AG04450 (cell line): ENCODE measurements at regions of chr19 and their contacts with region 1.

Region 1: GRCh38 chr19:13277104-13277809 is 127.0 kb downstream of the IER2 start:
- DNase-seq: peak; percentile 55
- H3K4me3 ChIP-seq: no peak overlapping the region
- H3K27ac ChIP-seq: peak overlapping the region; percentile 11
- H3K27me3 ChIP-seq: peaks cover 1% of the 10 kb centered on the region
- CTCF ChIP-seq: peak; percentile 61

Region 2: GRCh38 chr19:13291759-13292312 is 14.6 kb after region 1 on chr19:
- CTCF ChIA-PET with region 1: interaction called, 16 read pairs
- POLR2A ChIA-PET with region 1: interaction called, 3 read pairs
- DNase-seq: no peak
- H3K4me3 ChIP-seq: no peak overlapping the region
- H3K27ac ChIP-seq: no peak overlapping the region
- H3K27me3 ChIP-seq: no peaks in the 10 kb centered on the region
- CTCF ChIP-seq: no peak

Region 3: DNA sequence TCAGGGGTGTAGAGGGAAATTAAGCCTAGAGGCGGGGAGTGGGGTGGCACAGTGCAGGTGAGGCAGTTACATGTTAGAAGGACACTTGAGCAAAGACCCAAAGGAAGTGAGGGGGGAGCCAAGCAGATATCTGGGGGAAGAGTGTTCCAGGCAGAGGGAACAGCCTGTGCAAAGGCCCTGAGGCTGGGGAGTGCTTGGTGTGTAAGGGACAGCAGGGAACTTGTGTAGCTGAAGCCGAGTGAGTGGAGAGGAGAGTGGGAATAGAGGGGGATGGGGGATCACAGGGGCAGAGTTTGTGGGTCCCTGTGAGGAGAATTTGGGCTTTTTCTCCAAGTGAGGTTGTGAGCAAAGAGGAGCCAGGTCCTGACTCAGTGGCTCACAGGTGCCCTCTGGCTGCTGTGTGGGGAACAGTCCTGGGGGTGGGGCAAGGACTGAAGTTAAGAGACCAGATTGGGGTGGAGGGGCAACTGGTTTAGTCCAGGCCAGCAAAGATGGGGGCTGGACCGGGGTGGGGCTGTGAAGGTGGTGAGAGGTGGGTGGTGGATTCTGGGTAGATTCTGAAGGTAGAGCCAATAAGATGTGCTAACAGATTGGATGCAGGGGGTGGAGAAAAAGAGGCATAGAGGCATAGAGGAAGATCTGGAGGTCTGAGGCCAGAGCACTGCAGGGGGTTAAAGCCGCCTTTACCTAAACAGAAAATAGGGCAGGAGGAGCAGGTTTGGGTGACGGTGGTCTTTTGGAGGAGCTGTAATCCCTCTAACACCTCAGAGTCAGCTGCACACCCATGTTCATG is 153.7 kb after region 1 on chr19:
- CTCF ChIA-PET with region 1: interaction called, 36 read pairs
- POLR2A ChIA-PET with region 1: no interaction called
- DNase-seq: peak; percentile 11
- H3K4me3 ChIP-seq: no peak overlapping the region
- H3K27ac ChIP-seq: no peak overlapping the region
- H3K27me3 ChIP-seq: no peaks in the 10 kb centered on the region
- CTCF ChIP-seq: peak; percentile 84

Region 4: GRCh38 chr19:13521066-13521465 is 243.8 kb after region 1 on chr19:
- CTCF ChIA-PET with region 1: interaction called, 11 read pairs
- POLR2A ChIA-PET with region 1: no interaction called
- DNase-seq: no peak
- H3K4me3 ChIP-seq: no peak overlapping the region
- H3K27ac ChIP-seq: no peak overlapping the region
- H3K27me3 ChIP-seq: no peaks in the 10 kb centered on the region
- CTCF ChIP-seq: no peak

Region 5: DNA sequence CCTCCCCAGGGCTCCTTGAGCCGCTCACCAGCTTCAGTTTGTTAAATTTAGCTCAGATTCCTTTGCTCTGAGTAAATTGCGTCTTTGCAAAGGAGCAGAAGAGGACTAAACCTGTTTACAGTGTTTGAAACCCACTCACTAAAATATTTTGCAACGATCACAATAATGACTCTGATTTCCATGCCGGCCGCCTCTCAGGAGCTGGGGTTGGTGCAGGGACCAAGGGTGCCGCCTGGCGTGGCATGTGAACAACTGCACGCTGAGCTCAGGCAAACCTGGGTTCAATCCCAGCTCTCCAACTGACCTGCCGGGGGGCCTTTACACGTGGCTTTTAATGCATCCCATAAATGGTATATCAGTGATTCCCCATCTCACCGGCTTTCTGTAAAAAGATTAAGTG is 297.7 kb after region 1 on chr19:
- CTCF ChIA-PET with region 1: interaction called, 32 read pairs
- POLR2A ChIA-PET with region 1: no interaction called
- DNase-seq: no peak
- H3K4me3 ChIP-seq: no peak overlapping the region
- H3K27ac ChIP-seq: peak overlapping the region; percentile 21
- H3K27me3 ChIP-seq: no peaks in the 10 kb centered on the region
- CTCF ChIP-seq: peak; percentile 59

Region 6: DNA sequence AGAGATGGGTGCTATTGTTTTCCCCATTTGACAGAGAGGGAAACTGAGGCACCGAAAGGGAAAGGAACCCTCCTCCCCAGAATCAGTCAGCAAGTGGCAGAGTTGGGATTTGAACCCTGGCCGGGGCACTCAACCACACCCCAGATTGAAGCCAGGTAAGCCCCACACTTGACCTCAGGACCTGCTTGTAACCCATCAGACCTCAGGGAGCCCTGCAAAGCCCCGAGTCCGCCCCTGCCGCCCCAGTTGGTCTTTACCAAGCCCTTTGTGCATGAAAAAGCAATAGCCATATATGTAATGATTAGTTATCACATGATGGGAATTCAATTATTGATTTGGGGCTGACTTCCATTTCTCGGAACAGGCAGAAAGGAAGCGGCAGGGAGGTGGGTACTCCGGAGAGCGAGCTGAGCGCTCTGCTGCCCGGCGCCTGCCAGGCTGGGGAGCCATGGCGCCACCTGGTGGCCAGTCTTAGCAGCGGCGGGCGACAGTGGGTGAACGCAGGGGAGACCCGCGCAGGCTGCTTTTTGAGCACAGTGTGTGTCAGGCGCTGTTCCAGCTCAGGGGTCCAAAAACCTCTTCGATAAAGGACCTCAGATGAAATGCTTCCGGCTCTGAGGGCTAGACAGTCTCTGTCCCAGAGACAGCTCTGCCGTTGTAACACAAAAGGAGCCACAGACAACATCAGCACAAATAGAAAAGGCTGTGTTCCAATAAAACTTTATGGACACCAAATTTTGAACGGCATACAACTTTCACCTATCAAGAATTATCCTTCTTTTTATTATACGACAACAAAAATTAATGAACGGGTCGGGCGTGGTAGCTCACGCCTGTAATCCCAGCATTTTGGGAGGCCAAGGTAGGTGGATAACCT is 311.9 kb after region 1 on chr19:
- CTCF ChIA-PET with region 1: interaction called, 142 read pairs
- POLR2A ChIA-PET with region 1: interaction called, 6 read pairs
- DNase-seq: peak; percentile 24
- H3K4me3 ChIP-seq: no peak overlapping the region
- H3K27ac ChIP-seq: no peak overlapping the region
- H3K27me3 ChIP-seq: no peaks in the 10 kb centered on the region
- CTCF ChIP-seq: peak; percentile 96